Transverse colon (tissue), 4 donors: ENCODE measurements at regions of chr6 and their contacts with region 1.

Region 1: DNA sequence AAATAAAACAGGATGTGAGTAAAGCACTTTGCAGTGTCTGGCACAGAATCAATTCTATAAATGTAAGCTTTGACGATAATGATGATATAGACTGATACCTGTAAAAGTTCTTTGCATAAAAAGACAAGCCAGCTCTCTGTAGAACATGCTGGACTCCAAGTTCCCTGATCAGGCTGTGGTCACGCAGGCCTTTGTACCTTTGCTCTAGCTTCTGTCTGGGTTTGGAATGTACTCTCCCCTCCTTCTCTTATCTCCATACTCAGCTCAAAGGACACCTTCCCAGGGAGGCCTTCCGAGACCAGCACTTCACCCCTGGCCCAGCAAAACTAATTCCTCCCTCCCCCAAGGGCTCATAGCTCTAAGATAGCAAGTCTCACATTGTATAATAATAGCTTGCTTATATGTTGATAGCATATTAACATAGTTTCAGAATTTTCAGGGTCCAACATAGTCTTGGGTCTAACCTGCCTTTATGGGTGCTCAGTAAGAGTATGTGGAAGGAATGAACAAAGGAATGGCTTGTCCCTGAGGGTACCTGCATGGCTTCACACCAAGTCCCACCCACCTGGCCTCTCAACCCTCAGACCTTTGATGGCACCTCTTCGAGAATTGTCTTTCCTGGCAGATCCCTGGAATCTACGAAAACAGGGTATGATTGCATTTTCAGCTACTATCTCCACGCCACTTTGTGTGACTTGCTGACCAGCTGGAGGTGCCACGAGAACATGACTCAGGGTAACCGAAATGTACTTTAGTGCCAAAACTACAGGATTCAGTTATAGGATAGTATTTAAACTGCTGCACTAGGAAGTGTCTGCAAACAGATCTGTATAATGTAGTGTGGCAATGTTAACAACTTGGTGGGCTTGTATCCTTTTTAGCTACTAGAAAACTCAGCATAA is 41.7 kb upstream of the PIM1 start:
- DNase-seq: peak; percentile 42
- H3K4me3 ChIP-seq: no peak overlapping the region
- H3K27ac ChIP-seq: peak overlapping the region; percentile 10 to 48 (median 44)
- H3K4me1 ChIP-seq: peaks cover 14 to 37% (median 19%) of the 10 kb centered on the region in 4 donors
- H3K27me3 ChIP-seq: no peaks in the 10 kb centered on the region
- CTCF ChIP-seq: no peak
- EP300 ChIP-seq: no peak
- POLR2A ChIP-seq: no peak

Region 2: GRCh38 chr6:37102279-37103168 is 25.7 kb before region 1 on chr6:
- in situ Hi-C with region 1: no loop called
- intact Hi-C with region 1: loop called (anchors 2 kb)
- DNase-seq: peak; percentile 88
- H3K4me3 ChIP-seq: peak overlapping the region in 3 of 4 donors; percentile 29 to 45 (median 38)
- H3K27ac ChIP-seq: peak overlapping the region; percentile 86 to 90 (median 88)
- H3K4me1 ChIP-seq: peaks cover 10 to 37% (median 28%) of the 10 kb centered on the region in 4 donors
- H3K27me3 ChIP-seq: no peaks in the 10 kb centered on the region
- CTCF ChIP-seq: no peak
- EP300 ChIP-seq: peak; percentile 80
- POLR2A ChIP-seq: peak; percentile 25

Region 3: DNA sequence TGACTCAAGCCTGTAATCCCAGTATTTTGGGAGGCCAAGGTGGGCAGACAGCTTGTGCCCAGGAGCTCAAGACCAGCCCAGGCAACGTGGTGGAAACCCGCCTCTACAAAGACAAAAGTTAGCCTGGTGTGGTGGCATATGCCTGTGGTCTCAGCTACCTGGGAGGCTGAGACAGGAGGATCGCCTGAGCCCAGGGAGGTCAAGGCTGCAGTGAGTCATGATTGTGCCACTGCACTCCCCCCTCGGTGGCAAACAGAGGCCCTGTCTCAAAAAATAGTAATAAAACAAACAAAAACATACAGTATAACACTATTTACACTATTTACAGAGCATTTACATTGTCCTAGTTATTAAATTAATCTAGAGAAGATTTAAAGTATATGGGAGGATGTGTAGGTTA is 14.2 kb before region 1 on chr6:
- in situ Hi-C with region 1: no loop called
- intact Hi-C with region 1: no loop called
- DNase-seq: no peak
- H3K4me3 ChIP-seq: no peak overlapping the region
- H3K27ac ChIP-seq: no peak overlapping the region
- H3K4me1 ChIP-seq: no peaks in the 10 kb centered on the region
- H3K27me3 ChIP-seq: no peaks in the 10 kb centered on the region
- CTCF ChIP-seq: no peak
- EP300 ChIP-seq: no peak
- POLR2A ChIP-seq: no peak